Panc1 (cell line): ENCODE measurements at regions of chr1 and their contacts with region 1.

Region 1: GRCh38 chr1:32538887-32539583 is at the start of gene ZBTB8A:
- DNase-seq: peak; percentile 38
- ATAC-seq: peak; percentile 78
- H3K4me3 ChIP-seq: peak within 1 kb of the TSS; percentile 64 to 90
- H3K27ac ChIP-seq: peak within 1 kb of the TSS; percentile 83
- H3K4me1 ChIP-seq: peaks cover 16% of the 10 kb centered on the region
- H3K27me3 ChIP-seq: no peaks in the 10 kb centered on the region
- CTCF ChIP-seq: no peak
- total RNA-seq, gene ZBTB8A: 6.5 TPM

Region 2: DNA sequence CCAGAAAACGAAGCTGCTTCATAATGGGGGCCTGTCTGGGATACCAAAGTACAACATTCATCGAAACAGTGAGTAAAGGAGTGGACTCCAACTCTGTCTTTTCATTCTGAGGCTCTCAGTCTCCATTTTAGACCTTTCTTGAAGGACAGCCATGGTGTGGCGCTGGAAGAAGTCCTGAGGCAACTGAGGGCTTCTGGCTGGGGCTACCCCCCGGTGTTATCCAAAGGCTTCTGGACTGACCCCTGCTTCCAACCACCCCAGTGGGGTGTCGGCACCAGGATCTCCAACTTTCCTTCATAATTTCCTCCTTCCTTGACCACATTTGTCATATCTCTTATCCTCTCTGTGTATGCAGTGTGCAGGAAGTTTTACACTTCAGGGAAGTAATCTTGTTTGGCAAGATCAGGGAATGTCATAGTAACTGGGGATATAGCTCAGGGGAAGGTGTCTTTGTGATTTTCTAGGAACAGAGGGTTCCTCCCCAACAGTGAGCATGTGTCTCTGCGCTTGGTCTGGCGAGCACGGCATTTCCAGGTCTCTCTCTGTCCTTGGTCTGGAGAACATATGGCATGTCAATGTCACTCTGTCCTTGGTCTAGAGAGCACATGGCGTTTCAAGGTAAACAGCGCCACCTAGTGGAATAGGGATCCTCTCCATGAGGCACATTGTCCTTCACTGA is 125.4 kb before region 1 on chr1:
- CTCF ChIA-PET with region 1: no interaction called
- POLR2A ChIA-PET with region 1: no interaction called
- in situ Hi-C with region 1: no loop called
- intact Hi-C with region 1: no loop called
- DNase-seq: no peak
- ATAC-seq: peak; percentile 95
- H3K4me3 ChIP-seq: no peak overlapping the region
- H3K27ac ChIP-seq: no peak overlapping the region
- H3K4me1 ChIP-seq: no peaks in the 10 kb centered on the region
- H3K27me3 ChIP-seq: no peaks in the 10 kb centered on the region; the same call in none of the 2 replicates
- CTCF ChIP-seq: peak; percentile 84

Region 3: GRCh38 chr1:32496127-32496526 is 42.9 kb before region 1 on chr1:
- CTCF ChIA-PET with region 1: no interaction called
- POLR2A ChIA-PET with region 1: no interaction called
- in situ Hi-C with region 1: no loop called
- intact Hi-C with region 1: no loop called
- DNase-seq: no peak
- ATAC-seq: no peak
- H3K4me3 ChIP-seq: no peak overlapping the region
- H3K27ac ChIP-seq: no peak overlapping the region
- H3K4me1 ChIP-seq: no peaks in the 10 kb centered on the region; the same call in 1 of the 2 replicates
- H3K27me3 ChIP-seq: no peaks in the 10 kb centered on the region
- CTCF ChIP-seq: no peak

Region 4: DNA sequence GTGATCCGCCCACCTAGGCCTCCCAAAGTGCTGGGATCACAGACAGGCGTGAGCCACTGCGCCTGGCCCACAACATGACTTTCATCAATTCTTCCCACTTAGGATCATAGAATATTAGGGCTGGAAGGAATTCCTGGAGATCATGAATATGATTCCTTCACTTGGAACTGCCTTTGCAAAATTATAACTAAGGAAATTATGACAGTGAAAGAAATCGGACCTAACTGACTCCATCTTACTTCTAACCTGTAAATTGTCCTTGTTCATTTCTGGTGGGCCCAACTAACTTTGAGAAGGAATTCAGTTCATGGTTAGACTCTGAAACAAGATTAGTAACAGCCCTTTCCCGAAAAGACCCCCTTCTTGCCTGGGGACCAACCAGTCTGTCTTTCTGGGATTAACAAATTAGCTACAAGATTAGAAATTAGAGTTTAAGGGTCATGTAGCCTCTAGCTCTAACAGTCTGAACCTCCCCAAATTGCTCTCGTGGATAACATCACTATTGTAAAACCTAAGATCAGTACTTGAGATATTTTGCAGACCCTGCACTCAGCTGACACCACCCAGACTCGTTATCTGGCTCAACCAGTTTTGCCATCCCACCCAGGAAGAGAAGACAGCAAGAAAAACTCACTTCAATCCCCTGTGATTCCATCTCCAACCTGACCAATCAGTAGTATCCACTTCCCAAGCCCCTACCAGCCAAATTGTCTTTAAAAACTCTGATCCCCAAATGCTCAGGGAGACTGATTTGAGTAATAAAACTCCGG is 96.7 kb after region 1 on chr1:
- CTCF ChIA-PET with region 1: no interaction called
- POLR2A ChIA-PET with region 1: interaction called, 13 read pairs
- in situ Hi-C with region 1: no loop called
- intact Hi-C with region 1: no loop called
- DNase-seq: no peak
- ATAC-seq: no peak
- H3K4me3 ChIP-seq: no peak overlapping the region
- H3K27ac ChIP-seq: no peak overlapping the region
- H3K4me1 ChIP-seq: no peaks in the 10 kb centered on the region
- H3K27me3 ChIP-seq: no peaks in the 10 kb centered on the region
- CTCF ChIP-seq: no peak

Region 5: DNA sequence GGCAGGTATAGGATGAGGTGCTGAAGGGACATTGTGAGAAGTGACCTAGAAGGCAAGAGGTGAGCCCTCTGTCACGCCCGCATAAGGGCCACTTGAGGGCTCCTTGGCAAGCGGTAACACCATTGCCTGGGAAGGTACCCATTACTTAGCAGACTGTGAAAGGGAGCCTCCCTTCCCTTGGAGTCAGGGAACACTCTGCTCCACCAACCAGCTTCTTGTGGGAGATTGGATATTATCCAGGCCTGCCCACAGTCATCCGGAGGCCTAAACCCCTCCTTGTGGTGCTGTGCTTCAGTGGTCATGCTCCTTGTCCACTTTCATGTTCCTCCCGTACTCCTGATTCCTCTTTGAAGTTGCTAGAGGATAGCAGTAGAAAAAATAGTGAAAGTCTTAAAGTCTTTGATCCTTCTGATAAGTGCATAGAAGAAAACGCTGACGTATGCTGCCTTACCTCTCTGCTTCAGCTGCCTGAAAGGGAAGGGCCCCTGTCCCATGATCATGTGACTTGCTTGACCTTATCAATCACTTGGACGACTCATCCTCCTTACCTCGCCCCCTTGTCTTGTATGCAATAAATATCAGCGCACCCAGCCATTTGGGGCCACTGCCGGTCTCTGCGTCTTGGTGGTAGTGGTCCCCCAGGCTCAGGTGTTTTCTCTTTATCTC is 128.0 kb after region 1 on chr1:
- CTCF ChIA-PET with region 1: no interaction called
- POLR2A ChIA-PET with region 1: no interaction called
- in situ Hi-C with region 1: no loop called
- intact Hi-C with region 1: no loop called
- DNase-seq: no peak
- ATAC-seq: no peak
- H3K4me3 ChIP-seq: no peak overlapping the region
- H3K27ac ChIP-seq: no peak overlapping the region
- H3K4me1 ChIP-seq: no peaks in the 10 kb centered on the region
- H3K27me3 ChIP-seq: no peaks in the 10 kb centered on the region
- CTCF ChIP-seq: no peak